Activated naive CD4-positive, alpha-beta T cell treated with anti-CD3 and anti-CD28 coated beads for 36 hours (primary cell): ENCODE measurements at regions of chr6 and their contacts with region 1.

Region 1: DNA sequence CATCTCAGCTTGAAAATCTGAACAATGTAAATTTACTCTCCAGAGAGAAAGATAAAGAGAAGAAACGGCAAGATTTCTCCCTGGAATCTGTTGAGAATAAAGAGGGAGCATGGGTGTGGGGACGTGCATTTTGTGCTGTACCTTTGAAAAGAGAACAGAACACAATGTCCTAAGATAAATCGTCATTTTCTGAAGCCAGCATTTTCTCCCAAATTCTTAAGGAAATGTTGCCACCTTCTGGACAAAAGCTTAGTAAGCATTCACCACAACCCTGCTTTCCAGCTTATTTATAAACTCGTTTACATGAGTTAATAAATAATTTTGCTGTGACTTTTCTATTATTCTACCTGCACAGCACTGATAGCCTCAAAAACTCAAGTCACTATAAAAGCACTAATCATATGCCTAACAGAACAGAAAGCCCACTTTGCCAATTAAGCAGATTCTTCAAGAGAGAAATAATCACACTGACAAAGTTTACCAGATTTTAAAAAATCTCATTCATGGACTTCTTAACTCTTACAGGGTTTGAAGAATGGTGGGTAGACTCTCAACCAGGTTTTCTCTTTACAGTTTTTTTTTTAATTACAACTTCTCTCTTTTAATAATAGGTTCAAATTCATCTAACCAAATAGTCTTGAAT is 155.8 kb downstream of the MBOAT1 start:
- DNase-seq: no peak
- H3K4me3 Mint-ChIP-seq: no peak overlapping the region
- H3K27ac Mint-ChIP-seq: no peak overlapping the region
- H3K4me1 Mint-ChIP-seq: no peaks in the 10 kb centered on the region
- H3K27me3 Mint-ChIP-seq: no peaks in the 10 kb centered on the region

Region 2: DNA sequence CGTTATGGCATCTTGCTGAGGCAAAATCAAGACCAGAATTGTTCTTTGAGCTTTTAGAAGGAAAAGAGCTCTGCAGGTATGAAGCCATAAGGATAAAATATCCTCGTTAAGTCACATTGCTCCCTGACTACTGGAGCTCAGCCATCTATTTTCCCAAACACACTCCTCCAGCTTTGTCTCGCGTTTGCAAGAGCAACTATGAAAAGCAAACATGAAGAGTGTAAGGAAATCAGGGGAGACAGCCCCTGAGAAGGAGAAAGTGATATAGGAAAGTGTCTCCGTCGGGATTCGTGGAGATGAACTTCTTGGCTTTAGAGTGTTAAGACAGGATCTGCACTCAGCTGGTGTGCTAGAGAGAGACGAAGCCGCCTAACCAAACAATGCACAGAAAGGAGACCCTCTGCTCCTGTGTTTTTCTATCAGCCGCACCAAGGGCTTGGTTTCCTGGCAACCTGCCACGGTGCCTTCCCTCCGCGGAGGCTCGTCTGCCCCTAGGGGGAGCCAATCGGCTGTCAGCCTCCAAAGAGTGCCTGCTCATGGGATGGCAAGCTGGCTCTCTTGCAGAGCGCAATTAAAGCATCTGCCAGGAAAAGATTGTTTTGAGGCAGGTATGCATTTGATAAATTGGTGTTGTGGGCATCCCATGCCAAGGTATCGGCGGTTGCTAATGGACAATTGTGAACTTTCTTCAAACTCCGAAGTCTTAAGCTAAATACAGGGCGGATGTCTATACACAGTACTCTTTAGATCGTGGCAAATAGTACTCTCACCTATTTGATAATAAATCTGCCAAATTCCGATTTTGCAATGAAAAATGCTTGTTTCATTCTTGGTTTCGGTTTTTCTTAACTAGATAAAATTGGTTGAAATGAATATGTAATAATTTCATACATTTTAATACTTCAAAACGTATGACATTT is 1066.2 kb before region 1 on chr6:
- CTCF ChIA-PET with region 1: no interaction called
- intact Hi-C with region 1: loop called (anchors 10 kb)
- DNase-seq: peak; percentile 62
- H3K4me3 Mint-ChIP-seq: no peak overlapping the region
- H3K27ac Mint-ChIP-seq: no peak overlapping the region
- H3K4me1 Mint-ChIP-seq: no peaks in the 10 kb centered on the region
- H3K27me3 Mint-ChIP-seq: no peaks in the 10 kb centered on the region